CD4-positive, alpha-beta memory T cell (primary cell): ENCODE measurements at regions of chr1 and their contacts with region 1.

Region 1: DNA sequence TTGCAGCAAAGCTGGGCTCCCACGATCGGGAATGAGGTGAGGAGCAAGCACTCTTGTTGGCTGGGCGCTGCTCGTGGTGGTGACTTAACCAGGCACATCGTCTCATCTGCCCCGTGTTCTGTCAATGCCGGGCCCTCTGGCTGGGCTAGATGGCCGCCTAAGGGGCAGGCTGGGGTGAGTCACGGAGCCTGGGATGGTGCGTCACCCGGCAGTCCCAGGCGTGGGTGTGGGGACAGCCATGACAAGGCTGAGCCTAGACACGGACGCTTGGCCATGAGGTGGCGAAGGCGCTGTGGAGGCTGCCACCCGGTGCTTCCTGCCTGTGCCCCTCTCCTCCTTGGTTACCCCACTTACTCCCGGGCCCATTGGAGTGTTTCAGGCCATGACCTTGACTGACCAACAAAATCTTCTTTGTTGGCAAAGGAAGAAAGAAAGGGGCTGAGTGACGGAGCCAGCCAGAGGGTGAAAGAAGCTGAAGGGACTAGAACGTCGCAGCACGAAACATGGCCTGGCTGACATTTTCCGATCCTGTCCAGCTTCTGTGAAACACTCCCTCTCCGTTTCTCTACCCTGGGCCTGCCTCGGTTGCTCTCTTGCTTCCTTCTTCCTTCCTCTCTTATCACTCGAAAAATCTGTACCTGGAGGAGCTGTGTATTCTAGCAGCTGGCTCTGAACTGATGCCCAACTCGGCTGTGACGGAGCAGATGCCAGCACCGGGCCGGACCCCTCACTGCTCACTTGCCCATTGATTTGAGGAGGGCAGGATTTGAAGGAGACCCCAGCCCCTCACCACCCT is 596 bp downstream of the CD247 start:
- DNase-seq: peak; percentile 71 to 94 (median 76)
- H3K4me3 ChIP-seq: peak overlapping the region; percentile 82 to 83
- H3K4me3 Mint-ChIP-seq: peak overlapping the region; percentile 95 to 100 (median 99)
- H3K27ac ChIP-seq: peak overlapping the region; percentile 94
- H3K27ac Mint-ChIP-seq: peak overlapping the region; percentile 97 to 100 (median 99)
- H3K4me1 ChIP-seq: peaks cover 49% of the 10 kb centered on the region
- H3K4me1 Mint-ChIP-seq: peaks cover 22 to 70% (median 37%) of the 10 kb centered on the region in 4 donors
- H3K27me3 ChIP-seq: no peaks in the 10 kb centered on the region
- H3K27me3 Mint-ChIP-seq: no peaks in the 10 kb centered on the region

Region 2: DNA sequence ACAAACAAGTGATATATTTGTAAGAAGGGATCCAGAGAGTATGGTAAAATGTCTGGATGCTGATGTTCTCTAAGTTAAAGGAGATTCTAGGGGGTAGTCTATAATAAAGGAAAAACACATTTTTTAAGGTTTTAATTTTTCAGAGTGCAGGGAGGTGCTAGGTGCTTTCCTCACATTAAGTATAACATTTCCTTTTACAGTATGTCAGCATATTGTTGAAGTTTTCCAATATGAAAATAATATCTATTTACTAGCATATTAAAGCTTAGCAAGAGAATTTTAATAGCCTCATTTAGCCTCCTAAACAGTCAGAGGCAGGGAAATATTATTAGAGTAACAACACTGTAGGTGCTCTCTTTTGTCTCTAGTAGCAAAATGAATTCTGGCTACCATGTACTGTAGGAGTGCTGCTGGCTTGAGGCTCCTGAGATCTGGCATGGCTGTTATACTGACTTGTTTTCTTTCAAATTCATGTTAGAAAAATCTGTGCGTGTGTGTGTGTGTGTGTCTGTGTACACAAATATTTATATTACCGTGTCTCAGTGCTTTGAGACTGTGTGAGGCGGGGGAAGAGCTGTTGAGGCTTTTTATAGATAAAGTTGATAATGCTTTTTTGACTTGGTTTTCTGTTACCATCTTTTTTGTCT is 226.1 kb before region 1 on chr1:
- CTCF ChIA-PET with region 1: no interaction called
- POLR2A ChIA-PET with region 1: no interaction called
- intact Hi-C with region 1: no loop called
- DNase-seq: no peak
- H3K4me3 ChIP-seq: no peak overlapping the region
- H3K4me3 Mint-ChIP-seq: peak overlapping the region in 1 of 8 donors; percentile 3
- H3K27ac ChIP-seq: no peak overlapping the region
- H3K27ac Mint-ChIP-seq: peak overlapping the region in 3 of 7 donors; percentile 9 to 64 (median 35)
- H3K4me1 ChIP-seq: no peaks in the 10 kb centered on the region
- H3K4me1 Mint-ChIP-seq: peaks cover 7 to 29% (median 15%) of the 10 kb centered on the region in 4 donors
- H3K27me3 ChIP-seq: no peaks in the 10 kb centered on the region
- H3K27me3 Mint-ChIP-seq: no peaks in the 10 kb centered on the region

Region 3: GRCh38 chr1:167401260-167401873 is 116.4 kb before region 1 on chr1:
- CTCF ChIA-PET with region 1: interaction called, 25 read pairs
- POLR2A ChIA-PET with region 1: no interaction called
- intact Hi-C with region 1: loop called (anchors 5 kb)
- DNase-seq: peak in 4 of 5 donors; percentile 37 to 47 (median 41)
- H3K4me3 ChIP-seq: no peak overlapping the region
- H3K4me3 Mint-ChIP-seq: no peak overlapping the region
- H3K27ac ChIP-seq: no peak overlapping the region
- H3K27ac Mint-ChIP-seq: no peak overlapping the region
- H3K4me1 ChIP-seq: no peaks in the 10 kb centered on the region
- H3K4me1 Mint-ChIP-seq: peaks cover 0 to 3% (median under 1%) of the 10 kb centered on the region in 4 donors
- H3K27me3 ChIP-seq: no peaks in the 10 kb centered on the region
- H3K27me3 Mint-ChIP-seq: no peaks in the 10 kb centered on the region

Region 4: GRCh38 chr1:167447521-167448136 is 70.1 kb before region 1 on chr1:
- CTCF ChIA-PET with region 1: interaction called, 50 read pairs
- POLR2A ChIA-PET with region 1: interaction called, 230 read pairs
- intact Hi-C with region 1: loop called (anchors 1 kb)
- DNase-seq: peak; percentile 73 to 93 (median 76)
- H3K4me3 ChIP-seq: peak overlapping the region; percentile 7 to 34
- H3K4me3 Mint-ChIP-seq: peak overlapping the region; percentile 66 to 92 (median 82)
- H3K27ac ChIP-seq: peak overlapping the region; percentile 63
- H3K27ac Mint-ChIP-seq: peak overlapping the region; percentile 91 to 99 (median 96)
- H3K4me1 ChIP-seq: peaks cover 83% of the 10 kb centered on the region
- H3K4me1 Mint-ChIP-seq: peaks cover 59 to 93% (median 74%) of the 10 kb centered on the region in 4 donors
- H3K27me3 ChIP-seq: no peaks in the 10 kb centered on the region
- H3K27me3 Mint-ChIP-seq: no peaks in the 10 kb centered on the region

Region 5: GRCh38 chr1:167474191-167474716 is 43.5 kb before region 1 on chr1:
- CTCF ChIA-PET with region 1: interaction called, 6 read pairs
- POLR2A ChIA-PET with region 1: interaction called, 55 read pairs
- intact Hi-C with region 1: no loop called
- DNase-seq: peak; percentile 42 to 84 (median 51)
- H3K4me3 ChIP-seq: peak overlapping the region in 1 of 2 donors; percentile 32
- H3K4me3 Mint-ChIP-seq: peak overlapping the region; percentile 49 to 89 (median 80)
- H3K27ac ChIP-seq: peak overlapping the region; percentile 48
- H3K27ac Mint-ChIP-seq: peak overlapping the region; percentile 80 to 100 (median 92)
- H3K4me1 ChIP-seq: peaks cover 97% of the 10 kb centered on the region
- H3K4me1 Mint-ChIP-seq: peaks cover 62 to 99% (median 76%) of the 10 kb centered on the region in 4 donors
- H3K27me3 ChIP-seq: no peaks in the 10 kb centered on the region
- H3K27me3 Mint-ChIP-seq: no peaks in the 10 kb centered on the region

Region 6: DNA sequence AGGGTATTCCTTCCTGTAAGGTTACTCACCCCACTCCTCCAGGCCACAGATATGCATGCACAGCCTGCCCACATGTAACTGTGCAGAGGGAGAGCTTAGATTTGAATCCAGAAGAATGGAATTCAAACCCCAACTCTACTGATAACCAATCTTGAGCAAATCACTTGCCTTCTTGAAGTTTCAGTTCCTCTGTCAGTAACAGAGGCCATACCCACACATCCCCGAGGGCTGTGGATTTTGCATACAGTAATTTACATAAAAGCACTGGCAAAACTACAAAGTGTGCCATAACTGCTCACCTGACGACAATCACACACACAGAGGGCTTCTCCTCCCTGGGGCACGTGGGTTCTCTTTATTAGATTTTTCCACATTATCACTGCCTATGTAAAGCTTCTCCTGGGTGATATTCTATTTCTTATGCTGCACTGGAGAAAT is 18.1 kb before region 1 on chr1:
- CTCF ChIA-PET with region 1: interaction called, 21 read pairs
- POLR2A ChIA-PET with region 1: interaction called, 236 read pairs
- intact Hi-C with region 1: loop called (anchors 1 kb)
- DNase-seq: peak in 1 of 5 donors; percentile 62
- H3K4me3 ChIP-seq: no peak overlapping the region
- H3K4me3 Mint-ChIP-seq: peak overlapping the region in 7 of 8 donors; percentile 26 to 88 (median 73)
- H3K27ac ChIP-seq: peak overlapping the region; percentile 32
- H3K27ac Mint-ChIP-seq: peak overlapping the region; percentile 75 to 100 (median 88)
- H3K4me1 ChIP-seq: peaks cover 100% of the 10 kb centered on the region
- H3K4me1 Mint-ChIP-seq: peaks cover 83 to 100% (median 95%) of the 10 kb centered on the region in 4 donors
- H3K27me3 ChIP-seq: no peaks in the 10 kb centered on the region
- H3K27me3 Mint-ChIP-seq: no peaks in the 10 kb centered on the region

Region 7: DNA sequence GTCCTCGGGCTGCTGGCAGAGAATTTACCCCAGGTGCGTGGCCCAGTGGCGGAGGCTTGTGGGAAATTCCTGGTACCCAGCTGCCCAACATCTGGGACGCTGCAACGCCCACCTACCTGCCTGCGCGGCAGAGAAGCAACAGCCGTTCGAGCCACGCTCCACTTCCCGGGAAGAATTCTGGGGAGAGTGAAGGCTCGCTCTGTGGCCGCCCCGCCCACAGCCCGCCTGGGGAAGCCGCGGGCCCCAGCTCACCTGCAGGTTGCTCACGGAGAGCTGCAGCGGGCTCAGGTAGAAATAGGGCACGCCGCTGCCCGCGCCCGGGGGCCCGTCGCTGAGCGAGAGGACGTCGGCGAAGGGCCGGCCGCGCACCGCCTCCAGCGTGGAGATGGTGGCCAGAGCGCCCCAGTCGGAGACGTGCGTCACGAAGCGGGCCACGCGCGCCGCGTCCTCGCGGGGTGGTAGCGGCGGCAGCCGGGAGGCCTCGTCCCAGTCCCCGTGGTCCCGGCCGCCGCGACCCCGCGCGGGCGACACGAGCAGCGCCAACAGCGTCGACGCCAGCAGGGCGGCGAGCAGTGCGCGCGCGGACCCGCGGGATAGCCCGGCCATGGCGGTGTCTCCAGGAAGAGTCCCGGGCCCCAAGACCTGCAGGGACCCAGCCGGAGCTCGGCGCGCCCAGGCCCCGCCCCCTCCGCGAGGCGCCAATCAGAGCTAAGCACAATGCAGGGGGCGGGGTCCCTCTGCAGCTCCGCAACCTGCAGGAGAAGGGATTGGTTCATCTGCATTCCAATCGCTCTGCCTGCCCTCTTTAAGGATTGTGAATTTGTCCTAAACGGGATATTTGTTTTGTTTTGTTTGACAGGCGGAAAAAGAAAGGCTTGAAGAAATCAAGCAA is 35.6 kb after region 1 on chr1 and contains the start of gene CREG1:
- CTCF ChIA-PET with region 1: interaction called, 9 read pairs
- POLR2A ChIA-PET with region 1: interaction called, 28 read pairs
- intact Hi-C with region 1: loop called (anchors 2 kb)
- DNase-seq: peak; percentile 85 to 93 (median 87)
- H3K4me3 ChIP-seq: peak within 1 kb of the TSS; percentile 74 to 77
- H3K4me3 Mint-ChIP-seq: peak within 1 kb of the TSS; percentile 87 to 94 (median 90)
- H3K27ac ChIP-seq: peak within 1 kb of the TSS; percentile 41
- H3K27ac Mint-ChIP-seq: peak within 1 kb of the TSS; percentile 36 to 89 (median 84)
- H3K4me1 ChIP-seq: peaks cover 30% of the 10 kb centered on the region
- H3K4me1 Mint-ChIP-seq: peaks cover 23 to 56% (median 39%) of the 10 kb centered on the region in 4 donors
- H3K27me3 ChIP-seq: no peaks in the 10 kb centered on the region
- H3K27me3 Mint-ChIP-seq: peaks cover 0 to 3% of the 10 kb centered on the region in 2 donors
- total RNA-seq, gene CREG1: 21.0 to 21.7 TPM

Region 8: GRCh38 chr1:167599957-167600581 is 82.3 kb after region 1 on chr1:
- CTCF ChIA-PET with region 1: no interaction called
- POLR2A ChIA-PET with region 1: no interaction called
- intact Hi-C with region 1: no loop called
- DNase-seq: peak; percentile 56 to 74 (median 65)
- H3K4me3 ChIP-seq: no peak overlapping the region
- H3K4me3 Mint-ChIP-seq: peak overlapping the region in 7 of 8 donors; percentile 23 to 82 (median 57)
- H3K27ac ChIP-seq: no peak overlapping the region
- H3K27ac Mint-ChIP-seq: peak overlapping the region; percentile 25 to 62 (median 40)
- H3K4me1 ChIP-seq: peaks cover 39% of the 10 kb centered on the region
- H3K4me1 Mint-ChIP-seq: peaks cover 31 to 47% (median 41%) of the 10 kb centered on the region in 4 donors
- H3K27me3 ChIP-seq: no peaks in the 10 kb centered on the region
- H3K27me3 Mint-ChIP-seq: no peaks in the 10 kb centered on the region

Region 9: GRCh38 chr1:168159251-168159650 is 641.5 kb after region 1 on chr1:
- CTCF ChIA-PET with region 1: no interaction called
- POLR2A ChIA-PET with region 1: no interaction called
- intact Hi-C with region 1: no loop called
- DNase-seq: no peak
- H3K4me3 ChIP-seq: no peak overlapping the region
- H3K4me3 Mint-ChIP-seq: no peak overlapping the region
- H3K27ac ChIP-seq: no peak overlapping the region
- H3K27ac Mint-ChIP-seq: no peak overlapping the region
- H3K4me1 ChIP-seq: no peaks in the 10 kb centered on the region
- H3K4me1 Mint-ChIP-seq: no peaks in the 10 kb centered on the region
- H3K27me3 ChIP-seq: no peaks in the 10 kb centered on the region
- H3K27me3 Mint-ChIP-seq: peaks cover 23 to 30% of the 10 kb centered on the region in 2 donors